H1 (cell line): ENCODE measurements at regions of chr15 and their contacts with region 1.

Region 1: DNA sequence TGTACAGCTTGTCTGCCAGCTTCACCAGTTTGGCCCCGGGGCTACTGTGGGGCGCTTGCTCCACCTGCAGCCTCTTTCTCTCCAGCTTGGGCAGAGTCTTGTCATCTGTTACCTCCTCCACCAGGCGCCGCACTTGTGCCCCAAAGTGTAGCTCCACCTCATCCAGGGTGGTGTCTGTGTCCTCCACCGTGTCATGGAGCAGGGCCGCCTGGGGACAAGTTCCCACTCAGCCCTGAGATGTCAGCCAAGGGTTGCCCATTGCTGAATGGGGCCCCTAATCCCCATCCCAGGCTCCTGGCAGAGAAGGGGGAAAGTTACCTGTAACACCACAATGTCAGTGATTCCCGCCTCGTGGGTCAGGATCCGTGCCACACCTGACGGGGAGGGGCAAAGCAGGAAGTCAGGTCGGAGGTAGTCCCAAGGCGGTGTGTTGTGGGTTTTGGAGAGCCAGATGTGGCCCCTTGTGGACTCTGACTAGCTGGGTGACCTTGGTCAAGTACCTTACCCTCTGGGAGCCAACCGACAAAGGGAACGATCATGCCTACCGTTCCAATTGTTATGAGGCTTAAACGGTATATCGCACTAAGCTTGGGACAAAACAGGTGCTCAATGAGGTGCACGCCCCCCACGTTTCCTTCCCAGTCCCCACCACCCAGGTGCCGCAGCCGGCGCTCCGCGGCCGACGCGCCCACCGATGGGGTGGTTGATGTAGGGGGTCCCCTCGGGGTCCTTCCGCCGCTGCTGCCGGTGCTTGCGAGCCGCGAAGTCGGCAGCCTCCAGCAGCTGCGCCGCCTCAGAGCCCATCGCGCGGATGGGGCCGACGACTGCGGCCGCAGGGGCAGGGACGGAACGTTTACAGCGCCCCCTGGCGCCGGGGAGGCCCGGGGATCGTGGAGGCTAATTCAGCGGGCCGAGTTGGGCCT is at the start of gene HDDC3:
- DNase-seq: peak in 1 of 2 experiments; percentile 99
- H3K4me3 ChIP-seq: peak within 1 kb of the TSS; percentile 58 to 83 (median 76)
- H3K27ac ChIP-seq: peak within 1 kb of the TSS; percentile 39; the same call in 1 of the 2 replicates
- H3K4me1 ChIP-seq: peaks cover 0 to 13% (median 7%) of the 10 kb centered on the region in 4 experiments; a peak in 6 of 7 replicates
- H3K27me3 ChIP-seq: 0 out of 7 replicates have a peak, but pooled peaks cover 0 to 4% (median 0%) of the 10 kb centered on the region in 4 experiments
- CTCF ChIP-seq: peak; percentile 82 to 96 (median 93)
- EP300 ChIP-seq: no peak
- POLR2A ChIP-seq: no peak; a peak in 1 of 3 replicates
- RAD21 ChIP-seq: peak; percentile 39 to 65
- total RNA-seq, gene HDDC3: 16.3 and 17.0 TPM in 2 replicates

Region 2: DNA sequence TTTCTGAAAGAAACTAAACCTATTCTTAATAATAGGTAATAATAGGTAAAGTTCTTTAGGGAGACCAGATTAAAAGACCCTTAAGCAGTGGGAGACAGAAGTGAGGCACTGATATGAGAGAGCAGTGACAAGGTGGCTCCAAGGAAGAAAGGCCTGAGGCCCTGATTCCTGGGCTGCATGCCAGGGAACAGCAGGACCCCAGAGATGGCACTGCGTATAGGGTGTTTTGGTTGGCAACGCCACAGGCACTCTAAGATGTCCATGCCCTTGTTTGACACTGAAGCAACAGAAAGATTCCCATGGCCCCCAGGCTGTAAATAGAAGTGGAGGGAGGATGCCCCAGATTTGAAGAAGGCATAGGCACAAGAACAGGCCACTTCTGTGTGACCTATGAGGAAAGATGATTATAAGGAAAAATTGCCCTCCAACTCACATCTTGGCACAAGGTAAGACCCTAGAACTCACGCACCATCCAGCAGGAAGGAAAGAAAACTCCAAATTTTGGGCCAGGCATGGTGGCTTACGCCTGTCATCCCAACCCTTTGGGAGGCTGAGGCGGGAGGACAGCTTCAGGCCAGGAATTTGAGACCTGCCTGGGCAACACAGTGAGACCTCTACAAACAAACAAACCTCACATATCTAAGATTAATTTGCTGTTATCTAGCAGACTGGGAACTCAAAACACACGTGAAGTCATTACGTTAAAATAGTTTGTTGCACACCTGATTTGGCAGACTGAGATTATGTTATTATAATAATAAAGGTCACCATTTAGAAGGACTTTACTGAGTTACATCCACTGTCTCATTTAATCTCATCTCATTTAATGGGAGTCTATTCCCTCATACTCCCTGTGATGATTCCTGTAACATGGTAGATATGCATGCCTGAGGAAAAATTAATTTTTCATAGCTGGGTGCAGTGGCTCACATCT is 225.3 kb before region 1 on chr15:
- CTCF ChIA-PET with region 1: no interaction called
- POLR2A ChIA-PET with region 1: no interaction called
- DNase-seq: no peak
- H3K4me3 ChIP-seq: no peak overlapping the region
- H3K27ac ChIP-seq: no peak overlapping the region
- H3K4me1 ChIP-seq: no peaks in the 10 kb centered on the region
- H3K27me3 ChIP-seq: no peaks in the 10 kb centered on the region
- CTCF ChIP-seq: no peak
- EP300 ChIP-seq: no peak
- POLR2A ChIP-seq: no peak
- RAD21 ChIP-seq: no peak

Region 3: DNA sequence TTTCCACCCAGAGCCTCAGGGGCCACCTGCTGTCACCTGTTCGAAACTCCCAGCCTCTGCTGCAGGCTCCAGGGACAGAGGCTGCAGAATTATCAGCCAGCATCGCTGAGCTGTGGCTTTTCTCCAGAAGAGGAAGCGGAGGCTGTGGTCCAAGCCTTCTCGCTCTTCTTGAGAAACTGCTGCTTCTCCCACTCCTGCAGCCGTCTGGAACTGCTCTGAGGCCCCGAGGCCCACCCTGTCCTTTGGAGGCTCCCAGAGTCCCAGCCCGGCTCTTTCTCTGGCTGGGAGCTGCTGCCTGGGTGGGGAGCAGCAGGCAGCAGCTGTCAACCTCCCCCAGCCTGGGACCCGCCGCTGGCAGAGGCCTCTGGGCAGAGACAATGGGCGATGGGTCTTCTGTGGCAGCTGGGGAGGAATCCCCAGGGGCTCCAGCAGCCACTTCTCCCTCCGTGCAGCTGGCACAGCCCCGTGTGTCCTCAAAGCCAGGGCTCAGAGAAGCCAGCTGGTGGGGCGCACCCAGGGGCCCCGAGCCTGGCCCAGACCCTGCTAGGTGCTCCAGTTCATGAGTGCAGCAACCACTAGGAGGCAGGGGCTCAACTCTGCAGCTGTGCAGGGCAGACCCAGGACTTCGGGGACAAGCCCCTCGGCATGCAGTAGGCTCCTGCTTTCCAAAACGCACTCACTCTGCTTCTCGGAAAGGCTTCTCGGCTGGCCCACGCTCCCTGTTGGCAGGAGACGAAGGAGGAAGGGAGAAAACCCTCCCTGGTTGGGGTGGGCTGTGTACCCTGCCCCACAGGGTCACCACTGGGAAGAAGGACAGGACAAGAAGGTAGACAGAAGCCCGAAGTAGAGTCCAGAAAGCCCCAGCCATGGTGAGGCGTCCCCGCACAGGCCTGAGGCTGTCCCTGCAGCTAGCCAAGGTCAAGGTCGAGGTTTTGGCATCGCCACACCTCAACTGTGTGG is 113.5 kb before region 1 on chr15:
- CTCF ChIA-PET with region 1: interaction called, 12 read pairs
- POLR2A ChIA-PET with region 1: no interaction called
- DNase-seq: peak in 1 of 2 experiments; percentile 53
- H3K4me3 ChIP-seq: no peak overlapping the region
- H3K27ac ChIP-seq: no peak overlapping the region
- H3K4me1 ChIP-seq: peaks cover 9 to 20% (median 17%) of the 10 kb centered on the region in 4 experiments
- H3K27me3 ChIP-seq: no peaks in the 10 kb centered on the region
- CTCF ChIP-seq: peak; percentile 59 to 65 (median 63)
- EP300 ChIP-seq: no peak
- POLR2A ChIP-seq: no peak
- RAD21 ChIP-seq: peak; percentile 59 to 73

Region 4: DNA sequence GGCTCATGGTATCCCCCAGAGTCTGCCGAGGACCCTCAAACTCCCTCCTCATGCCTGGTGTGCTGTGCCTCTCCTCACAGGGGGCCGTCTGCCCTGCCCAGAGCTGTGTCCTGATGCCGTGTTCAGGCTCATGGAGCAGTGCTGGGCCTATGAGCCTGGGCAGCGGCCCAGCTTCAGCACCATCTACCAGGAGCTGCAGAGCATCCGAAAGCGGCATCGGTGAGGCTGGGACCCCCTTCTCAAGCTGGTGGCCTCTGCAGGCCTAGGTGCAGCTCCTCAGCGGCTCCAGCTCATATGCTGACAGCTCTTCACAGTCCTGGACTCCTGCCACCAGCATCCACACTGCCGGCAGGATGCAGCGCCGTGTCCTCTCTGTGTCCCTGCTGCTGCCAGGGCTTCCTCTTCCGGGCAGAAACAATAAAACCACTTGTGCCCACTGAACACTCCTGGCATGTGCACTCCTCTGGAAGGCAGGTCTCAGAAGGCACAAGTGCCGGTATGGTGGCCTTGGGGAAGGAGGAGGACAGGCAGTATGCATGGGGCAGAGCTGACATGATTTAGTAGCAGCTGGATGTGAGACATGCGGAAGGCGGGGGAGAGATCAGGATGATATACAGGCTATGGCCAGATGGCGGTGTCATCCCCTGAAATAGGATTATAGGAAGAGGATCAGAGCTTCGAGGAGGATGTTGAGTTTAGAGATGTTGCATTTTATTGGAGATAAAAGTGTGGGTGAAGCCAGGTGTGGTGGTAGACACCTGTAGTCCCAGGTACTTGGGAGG is 36.5 kb before region 1 on chr15:
- CTCF ChIA-PET with region 1: interaction called, 187 read pairs
- POLR2A ChIA-PET with region 1: interaction called, 3 read pairs
- DNase-seq: no peak
- H3K4me3 ChIP-seq: no peak overlapping the region
- H3K27ac ChIP-seq: no peak overlapping the region
- H3K4me1 ChIP-seq: no peaks in the 10 kb centered on the region; a peak in 1 of 7 replicates
- H3K27me3 ChIP-seq: no peaks in the 10 kb centered on the region; a peak in 1 of 7 replicates
- CTCF ChIP-seq: peak in 2 of 3 experiments; percentile 19 to 43; a peak in 3 of 4 replicates
- EP300 ChIP-seq: no peak
- POLR2A ChIP-seq: no peak
- RAD21 ChIP-seq: peak; percentile 11 to 23; a peak in 1 of 4 replicates

Region 5: DNA sequence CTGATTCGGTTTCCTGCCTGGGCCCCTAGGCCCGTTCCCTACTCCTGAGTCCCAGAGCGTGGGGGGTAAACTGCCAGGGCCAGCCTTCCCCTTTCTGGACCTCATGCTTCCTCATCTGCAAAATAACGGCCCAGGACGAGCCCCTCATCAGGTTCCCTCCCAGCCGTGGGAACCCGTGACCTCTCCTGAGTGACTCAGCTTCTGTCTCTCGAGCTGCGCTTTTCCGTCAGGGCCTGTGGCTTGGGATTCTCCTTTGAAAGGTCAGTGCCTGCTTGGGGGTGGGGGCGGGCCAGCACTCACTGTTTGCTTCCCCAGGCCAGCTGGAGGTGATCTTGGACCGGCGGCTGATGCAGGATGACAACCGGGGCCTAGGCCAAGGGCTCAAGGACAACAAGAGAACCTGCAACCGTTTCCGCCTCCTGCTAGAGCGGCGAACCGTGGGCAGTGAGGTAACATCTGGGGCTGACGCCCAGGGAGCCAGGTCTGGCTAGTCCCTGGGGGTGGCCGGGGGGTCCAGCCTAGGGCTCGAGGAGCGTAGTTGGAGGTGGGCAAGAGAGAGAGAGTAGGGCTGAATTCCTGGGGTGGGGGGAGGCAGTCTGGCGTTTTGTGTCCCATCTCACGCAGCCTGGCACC is 16.1 kb before region 1 on chr15:
- CTCF ChIA-PET with region 1: interaction called, 187 read pairs
- POLR2A ChIA-PET with region 1: interaction called, 6 read pairs
- DNase-seq: no peak
- H3K4me3 ChIP-seq: no peak overlapping the region
- H3K27ac ChIP-seq: no peak overlapping the region
- H3K4me1 ChIP-seq: peaks cover 0 to 2% (median 0%) of the 10 kb centered on the region in 4 experiments; a peak in 2 of 7 replicates
- H3K27me3 ChIP-seq: no peaks in the 10 kb centered on the region
- CTCF ChIP-seq: no peak
- EP300 ChIP-seq: no peak
- POLR2A ChIP-seq: no peak
- RAD21 ChIP-seq: no peak

Region 6: GRCh38 chr15:90954712-90955671 is 23.0 kb after region 1 on chr15 and contains the start of gene RCCD1:
- CTCF ChIA-PET with region 1: interaction called, 306 read pairs
- POLR2A ChIA-PET with region 1: interaction called, 20 read pairs
- DNase-seq: peak; percentile 85 to 92
- H3K4me3 ChIP-seq: peak within 1 kb of the TSS; percentile 46 to 72 (median 58)
- H3K27ac ChIP-seq: peak within 1 kb of the TSS; percentile 92
- H3K4me1 ChIP-seq: peaks cover 0 to 15% (median 8%) of the 10 kb centered on the region in 4 experiments; a peak in 6 of 7 replicates
- H3K27me3 ChIP-seq: no peaks in the 10 kb centered on the region
- CTCF ChIP-seq: no peak
- EP300 ChIP-seq: no peak
- POLR2A ChIP-seq: peak; percentile 79 to 95
- RAD21 ChIP-seq: no peak
- total RNA-seq, gene RCCD1: 16.2 and 18.8 TPM in 2 replicates

Region 7: DNA sequence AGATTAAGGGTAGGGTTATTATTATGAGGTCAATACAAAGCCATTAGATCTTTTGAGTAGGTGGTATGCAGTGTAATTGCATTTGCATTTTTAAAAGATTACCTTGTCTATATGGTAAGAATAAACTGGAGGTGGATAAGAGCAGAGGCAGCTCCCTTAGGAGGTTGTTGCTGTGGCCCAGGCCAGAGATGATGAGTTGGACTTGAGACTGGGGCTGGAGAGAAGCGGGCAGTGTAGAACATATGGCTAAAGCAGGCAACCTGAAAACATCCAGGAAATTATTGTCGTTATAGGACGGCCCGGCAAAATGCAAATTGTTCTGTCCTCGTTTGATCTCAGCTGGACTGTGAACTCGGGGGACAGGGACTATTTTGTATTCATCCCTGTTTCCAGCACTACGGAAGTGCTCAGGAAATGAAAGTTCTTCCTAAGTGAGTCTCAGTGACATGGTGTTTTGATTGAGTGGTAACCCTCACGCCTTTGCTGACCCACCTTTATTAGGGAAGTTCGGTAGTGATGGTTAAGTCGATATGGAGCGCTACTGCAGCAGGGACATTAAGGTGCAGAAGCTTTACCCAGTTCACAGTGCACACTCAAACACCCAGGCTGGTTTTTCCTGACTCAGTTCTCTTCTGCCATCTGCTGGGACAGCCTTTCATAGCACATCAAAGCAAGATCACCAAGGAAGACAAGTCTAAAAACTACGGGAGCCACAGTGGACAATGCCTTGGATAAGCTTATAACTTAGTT is 117.6 kb after region 1 on chr15:
- CTCF ChIA-PET with region 1: interaction called, 13 read pairs
- POLR2A ChIA-PET with region 1: no interaction called
- DNase-seq: no peak
- H3K4me3 ChIP-seq: no peak overlapping the region
- H3K27ac ChIP-seq: no peak overlapping the region
- H3K4me1 ChIP-seq: no peaks in the 10 kb centered on the region
- H3K27me3 ChIP-seq: no peaks in the 10 kb centered on the region
- CTCF ChIP-seq: peak; percentile 29 to 76 (median 67)
- EP300 ChIP-seq: no peak
- POLR2A ChIP-seq: no peak
- RAD21 ChIP-seq: peak; percentile 77 to 80